Calu3 (cell line): ENCODE measurements at regions of chr11 and their contacts with region 1.

Region 1: DNA sequence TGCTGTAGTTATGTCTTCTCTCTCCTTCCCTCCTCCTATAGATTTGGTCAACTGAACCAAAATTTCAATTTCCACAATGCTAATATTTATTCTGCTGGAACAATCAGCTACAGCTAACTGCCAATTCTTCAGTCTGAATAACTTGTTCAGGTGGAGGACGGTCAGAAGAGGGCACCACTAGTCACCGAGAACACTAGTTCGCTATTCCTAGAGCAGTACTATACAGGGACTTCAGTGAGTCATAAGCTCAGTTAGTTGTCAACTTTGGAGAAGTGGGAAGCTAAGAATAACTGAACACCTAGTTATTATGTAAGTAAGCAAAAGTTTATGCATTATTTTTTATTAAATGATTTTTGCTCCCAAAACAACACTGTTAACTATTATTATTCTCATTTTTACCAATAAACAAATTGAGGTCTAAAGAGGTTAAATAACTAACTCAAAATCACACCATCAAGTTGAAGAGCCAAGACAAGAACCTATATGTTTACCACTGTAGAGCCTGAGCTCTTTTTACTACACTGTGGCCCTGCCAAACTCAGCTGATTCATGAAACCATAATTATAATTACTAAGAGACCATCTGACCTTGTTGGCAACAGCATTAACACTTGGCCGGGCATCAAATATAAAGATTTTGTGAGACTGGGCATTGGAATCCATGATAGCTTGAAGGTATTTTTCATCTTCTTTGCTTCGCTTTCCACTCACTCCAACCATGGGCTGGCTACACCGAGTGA is 59.0 kb downstream of the CEP57 start:
- DNase-seq: peak; percentile 38
- H3K4me3 Mint-ChIP-seq: no peak overlapping the region
- H3K27ac Mint-ChIP-seq: no peak overlapping the region
- H3K4me1 Mint-ChIP-seq: no peaks in the 10 kb centered on the region
- H3K27me3 Mint-ChIP-seq: no peaks in the 10 kb centered on the region
- CTCF ChIP-seq: no peak

Region 2: DNA sequence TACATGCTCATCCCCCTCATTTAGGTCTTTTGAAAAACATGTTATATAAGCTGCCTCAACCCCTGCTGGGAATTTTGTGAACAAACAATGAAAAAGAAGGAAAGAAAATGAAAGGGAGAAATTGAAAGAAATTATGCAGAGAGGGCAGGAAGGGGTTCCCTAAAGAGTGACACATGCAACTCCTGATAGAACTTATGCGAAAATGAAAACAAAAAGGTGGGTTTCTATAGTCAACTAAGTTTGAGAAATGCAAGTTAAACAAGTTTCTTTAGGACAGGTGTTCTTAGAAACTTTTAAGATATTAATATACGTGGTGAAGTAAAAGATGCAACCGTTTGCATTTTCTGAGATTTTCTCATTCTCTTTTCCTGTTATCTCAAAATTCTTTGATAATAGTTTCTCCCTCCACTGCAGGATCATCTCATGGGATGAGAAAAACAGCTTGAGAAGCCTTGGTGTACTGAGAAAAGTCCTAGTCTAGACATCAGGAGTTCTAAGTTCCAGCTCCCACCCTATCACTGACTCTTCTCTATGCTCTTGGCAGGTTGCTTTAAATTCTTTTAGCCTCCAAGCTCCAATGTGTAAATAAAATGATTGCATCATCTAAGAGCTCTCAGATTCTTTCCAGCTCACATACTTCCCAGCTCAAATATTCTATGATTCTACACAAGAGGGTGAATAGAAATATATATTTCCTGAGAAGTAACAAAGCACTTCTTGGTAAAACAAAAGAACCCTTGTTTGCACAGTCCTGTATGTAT is 168.9 kb before region 1 on chr11:
- CTCF ChIA-PET with region 1: no interaction called
- intact Hi-C with region 1: no loop called
- DNase-seq: no peak
- H3K4me3 Mint-ChIP-seq: no peak overlapping the region
- H3K27ac Mint-ChIP-seq: peak overlapping the region; percentile 80
- H3K4me1 Mint-ChIP-seq: peaks cover 29% of the 10 kb centered on the region
- H3K27me3 Mint-ChIP-seq: no peaks in the 10 kb centered on the region
- CTCF ChIP-seq: no peak

Region 3: GRCh38 chr11:95835768-95836488 is 13.3 kb before region 1 on chr11:
- CTCF ChIA-PET with region 1: interaction called, 10 read pairs
- intact Hi-C with region 1: no loop called
- DNase-seq: peak; percentile 62
- H3K4me3 Mint-ChIP-seq: no peak overlapping the region
- H3K27ac Mint-ChIP-seq: peak overlapping the region; percentile 52
- H3K4me1 Mint-ChIP-seq: peaks cover 9% of the 10 kb centered on the region
- H3K27me3 Mint-ChIP-seq: no peaks in the 10 kb centered on the region
- CTCF ChIP-seq: peak; percentile 68

Region 4: GRCh38 chr11:95968585-95968984 is 119.3 kb after region 1 on chr11:
- CTCF ChIA-PET with region 1: no interaction called
- intact Hi-C with region 1: loop called (anchors 10 kb)
- DNase-seq: no peak
- H3K4me3 Mint-ChIP-seq: no peak overlapping the region
- H3K27ac Mint-ChIP-seq: no peak overlapping the region
- H3K4me1 Mint-ChIP-seq: no peaks in the 10 kb centered on the region
- H3K27me3 Mint-ChIP-seq: no peaks in the 10 kb centered on the region
- CTCF ChIP-seq: no peak

Region 5: GRCh38 chr11:96054870-96055705 is 205.8 kb after region 1 on chr11:
- CTCF ChIA-PET with region 1: no interaction called
- intact Hi-C with region 1: loop called (anchors 10 kb)
- DNase-seq: no peak
- H3K4me3 Mint-ChIP-seq: no peak overlapping the region
- H3K27ac Mint-ChIP-seq: no peak overlapping the region
- H3K4me1 Mint-ChIP-seq: peaks cover 44% of the 10 kb centered on the region
- H3K27me3 Mint-ChIP-seq: no peaks in the 10 kb centered on the region
- CTCF ChIP-seq: no peak

Region 6: GRCh38 chr11:96254087-96254486 is 404.8 kb after region 1 on chr11:
- CTCF ChIA-PET with region 1: no interaction called
- intact Hi-C with region 1: no loop called
- DNase-seq: no peak
- H3K4me3 Mint-ChIP-seq: peak overlapping the region; percentile 54
- H3K27ac Mint-ChIP-seq: peak overlapping the region; percentile 90
- H3K4me1 Mint-ChIP-seq: peaks cover 53% of the 10 kb centered on the region
- H3K27me3 Mint-ChIP-seq: no peaks in the 10 kb centered on the region
- CTCF ChIP-seq: no peak

Region 7: GRCh38 chr11:96389720-96390487 is 540.6 kb after region 1 on chr11 and contains the starts of genes CCDC82 and JRKL:
- CTCF ChIA-PET with region 1: interaction called, 21 read pairs
- intact Hi-C with region 1: no loop called
- DNase-seq: peak; percentile 96
- H3K4me3 Mint-ChIP-seq: peak within 1 kb of the TSS; percentile 92
- H3K27ac Mint-ChIP-seq: peak within 1 kb of the TSS; percentile 93
- H3K4me1 Mint-ChIP-seq: peaks cover 33% of the 10 kb centered on the region
- H3K27me3 Mint-ChIP-seq: no peaks in the 10 kb centered on the region
- CTCF ChIP-seq: no peak
- total RNA-seq, gene CCDC82: 20.1 and 23.3 TPM in 2 replicates
- total RNA-seq, gene JRKL: 9.3 and 11.6 TPM in 2 replicates

Region 8: DNA sequence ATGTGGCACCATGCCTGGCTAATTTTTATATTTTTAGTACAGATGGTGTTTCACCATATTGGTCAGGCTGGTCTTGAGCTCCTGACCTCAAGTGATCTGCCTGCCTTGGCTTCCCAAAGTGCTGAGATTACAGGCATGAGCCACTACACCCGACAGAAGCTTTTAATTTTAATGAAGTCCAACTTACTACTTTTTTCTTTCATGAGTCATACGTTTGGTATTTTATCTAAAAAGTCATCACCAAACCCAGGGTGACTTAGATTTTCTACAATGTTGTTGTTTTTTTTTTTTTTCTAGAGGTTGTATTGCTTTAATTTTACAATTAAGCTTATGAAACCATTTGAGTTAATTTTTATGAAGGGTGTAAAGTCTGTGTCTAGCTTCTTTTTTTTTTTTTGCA is 575.4 kb after region 1 on chr11:
- CTCF ChIA-PET with region 1: no interaction called
- intact Hi-C with region 1: loop called (anchors 2 kb)
- DNase-seq: no peak
- H3K4me3 Mint-ChIP-seq: no peak overlapping the region
- H3K27ac Mint-ChIP-seq: no peak overlapping the region
- H3K4me1 Mint-ChIP-seq: peaks cover 22% of the 10 kb centered on the region
- H3K27me3 Mint-ChIP-seq: no peaks in the 10 kb centered on the region
- CTCF ChIP-seq: no peak